ENCODE measurements at regions of chr9 and their contacts with region 1.

Region 1: DNA sequence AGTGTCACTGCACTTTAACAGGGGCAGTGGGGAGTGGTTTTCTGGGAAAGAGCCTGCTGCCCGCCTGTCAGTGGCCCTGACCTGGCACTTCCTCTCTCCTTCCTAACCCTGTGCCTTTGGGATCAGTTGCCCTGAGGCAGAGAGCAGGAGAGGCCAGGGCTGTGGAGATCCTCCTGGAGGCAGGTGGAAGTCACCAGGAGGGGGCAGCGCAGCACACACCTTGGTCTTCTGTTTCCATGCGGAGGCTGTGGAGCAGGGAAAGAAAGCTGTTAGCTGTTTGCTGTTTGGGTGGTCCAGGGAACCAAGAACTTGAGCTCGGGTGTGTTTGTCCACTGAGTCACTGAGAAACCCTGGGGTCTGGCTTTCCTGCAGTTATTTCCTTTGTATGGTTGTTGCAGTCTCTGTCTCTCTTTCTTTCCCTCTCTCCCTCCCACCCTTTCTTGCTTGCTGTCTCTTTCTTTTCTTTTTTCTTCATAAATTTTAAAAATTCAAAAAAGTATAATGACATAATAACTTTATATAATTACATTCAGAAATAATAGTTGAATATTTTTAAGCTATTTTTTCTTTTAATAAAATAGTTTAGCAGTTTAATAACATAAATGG is 28.1 kb downstream of the NTRK2 start:
- DNase-seq: peak; percentile 65
- H3K27ac ChIP-seq: no peak overlapping the region
- CTCF ChIP-seq: peak; percentile 47

Region 2: DNA sequence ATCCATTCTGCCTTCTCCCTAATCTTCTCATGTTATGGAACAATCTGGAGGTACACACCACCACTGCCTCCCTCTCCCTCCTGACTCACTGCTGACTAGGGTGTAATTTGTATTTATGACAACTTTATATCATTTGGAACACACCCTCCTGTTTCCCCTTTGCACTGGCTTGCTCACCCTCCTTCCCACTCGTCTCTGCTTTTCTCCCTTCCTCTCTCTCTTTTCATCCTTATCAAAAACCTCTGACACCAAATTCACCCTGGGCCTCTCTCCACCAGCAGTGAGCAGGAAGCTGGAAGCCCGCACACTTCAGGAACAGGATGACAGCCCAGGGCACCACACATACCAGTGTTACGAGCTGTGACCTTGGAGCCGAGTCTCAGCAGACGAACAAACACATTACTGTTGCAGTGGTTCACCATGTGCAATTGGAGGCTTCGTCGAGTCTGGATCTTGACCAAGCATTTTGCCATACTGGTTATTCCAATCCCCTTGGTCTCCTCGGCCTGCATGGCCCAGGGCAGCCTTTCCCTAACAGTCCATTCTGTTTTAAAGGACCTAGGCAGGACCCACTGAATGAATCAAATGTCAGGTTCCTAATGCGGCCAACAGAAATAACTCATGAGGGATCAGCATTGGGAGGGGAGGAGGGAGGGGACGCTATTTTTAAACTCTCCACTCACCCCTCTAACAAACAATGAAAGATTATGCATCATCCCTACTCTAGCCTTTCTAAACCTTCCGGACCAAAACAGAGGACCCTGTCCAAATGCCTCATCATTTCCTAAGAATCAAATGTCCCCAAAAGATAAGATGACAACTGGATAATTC is 1430.7 kb before region 1 on chr9:
- CTCF ChIA-PET with region 1: no interaction called
- POLR2A ChIA-PET with region 1: no interaction called
- DNase-seq: no peak
- H3K27ac ChIP-seq: no peak overlapping the region
- CTCF ChIP-seq: no peak

Region 3: GRCh38 chr9:84397151-84397728 is 300.4 kb before region 1 on chr9:
- CTCF ChIA-PET with region 1: interaction called, 10 read pairs
- POLR2A ChIA-PET with region 1: no interaction called
- DNase-seq: peak; percentile 79
- H3K27ac ChIP-seq: no peak overlapping the region
- CTCF ChIP-seq: peak; percentile 79

Region 4: GRCh38 chr9:84781458-84781857 is 83.8 kb after region 1 on chr9:
- CTCF ChIA-PET with region 1: interaction called, 17 read pairs
- POLR2A ChIA-PET with region 1: no interaction called
- DNase-seq: peak; percentile 24
- H3K27ac ChIP-seq: no peak overlapping the region
- CTCF ChIP-seq: peak; percentile 14; the same call in 1 of the 2 replicates

Region 5: GRCh38 chr9:84891924-84892323 is 194.3 kb after region 1 on chr9:
- CTCF ChIA-PET with region 1: interaction called, 11 read pairs
- POLR2A ChIA-PET with region 1: no interaction called
- DNase-seq: no peak
- H3K27ac ChIP-seq: no peak overlapping the region
- CTCF ChIP-seq: no peak

Region 6: DNA sequence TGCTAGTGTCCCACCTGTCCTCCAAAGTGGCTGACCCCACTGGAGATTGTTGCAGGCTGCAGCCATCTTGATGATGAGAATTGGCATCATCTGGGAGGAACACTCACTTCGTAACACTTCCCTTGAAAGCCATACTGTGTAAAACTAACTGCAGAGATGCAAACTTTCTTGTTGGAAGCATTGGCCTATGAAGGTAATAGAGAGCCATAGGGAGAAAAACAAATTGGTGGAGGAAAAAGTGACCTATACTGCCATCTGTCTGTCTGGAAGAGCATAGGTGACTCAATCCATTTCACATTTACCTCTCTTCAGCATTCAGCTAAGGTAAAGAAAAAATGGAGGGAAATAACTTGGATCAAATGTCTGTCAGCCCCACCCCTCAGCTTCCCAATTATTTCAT is 445.4 kb after region 1 on chr9:
- CTCF ChIA-PET with region 1: interaction called, 10 read pairs
- POLR2A ChIA-PET with region 1: no interaction called
- DNase-seq: peak; percentile 34
- H3K27ac ChIP-seq: peak overlapping the region; percentile 62
- CTCF ChIP-seq: peak; percentile 39

Region 7: GRCh38 chr9:85425153-85425611 is 727.6 kb after region 1 on chr9:
- CTCF ChIA-PET with region 1: interaction called, 10 read pairs
- POLR2A ChIA-PET with region 1: no interaction called
- DNase-seq: peak; percentile 81
- H3K27ac ChIP-seq: no peak overlapping the region
- CTCF ChIP-seq: peak; percentile 60